ENCODE measurements at regions of chr12 and their contacts with region 1.

Region 1: GRCh38 chr12:47032644-47033043 is 46.8 kb upstream of the PCED1B start:
- DNase-seq: no peak
- H3K4me3 Mint-ChIP-seq: no peak overlapping the region
- H3K27ac Mint-ChIP-seq: no peak overlapping the region
- H3K4me1 Mint-ChIP-seq: peaks cover 9% of the 10 kb centered on the region
- H3K27me3 Mint-ChIP-seq: peaks cover 5% of the 10 kb centered on the region

Region 2: DNA sequence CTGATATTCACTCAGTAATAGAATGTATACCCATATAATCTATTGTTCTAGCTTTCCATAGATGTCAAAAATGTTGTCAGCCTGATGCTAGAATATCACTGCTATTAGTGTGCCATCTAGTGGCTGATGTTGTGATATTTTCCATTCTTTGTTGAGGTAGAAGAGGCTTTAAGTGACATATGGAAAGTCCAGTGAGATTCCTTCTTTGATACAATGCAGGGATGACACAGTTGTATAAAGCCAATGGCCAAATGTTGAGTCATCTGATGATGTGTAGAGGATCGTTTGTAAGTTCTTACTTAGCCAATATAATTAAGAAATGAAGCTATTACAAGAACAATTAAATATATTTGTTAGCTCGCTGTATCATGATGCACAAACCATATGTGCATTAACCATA is 11.3 kb before region 1 on chr12:
- CTCF ChIA-PET with region 1: interaction called, 13 read pairs
- POLR2A ChIA-PET with region 1: no interaction called
- DNase-seq: no peak
- H3K4me3 Mint-ChIP-seq: no peak overlapping the region
- H3K27ac Mint-ChIP-seq: no peak overlapping the region
- H3K4me1 Mint-ChIP-seq: peaks cover 6% of the 10 kb centered on the region
- H3K27me3 Mint-ChIP-seq: peaks cover 18% of the 10 kb centered on the region

Region 3: GRCh38 chr12:47071241-47071852 is 38.7 kb after region 1 on chr12:
- CTCF ChIA-PET with region 1: interaction called, 23 read pairs
- POLR2A ChIA-PET with region 1: no interaction called
- DNase-seq: no peak
- H3K4me3 Mint-ChIP-seq: no peak overlapping the region
- H3K27ac Mint-ChIP-seq: no peak overlapping the region
- H3K4me1 Mint-ChIP-seq: peaks cover 3% of the 10 kb centered on the region
- H3K27me3 Mint-ChIP-seq: no peaks in the 10 kb centered on the region

Region 4: DNA sequence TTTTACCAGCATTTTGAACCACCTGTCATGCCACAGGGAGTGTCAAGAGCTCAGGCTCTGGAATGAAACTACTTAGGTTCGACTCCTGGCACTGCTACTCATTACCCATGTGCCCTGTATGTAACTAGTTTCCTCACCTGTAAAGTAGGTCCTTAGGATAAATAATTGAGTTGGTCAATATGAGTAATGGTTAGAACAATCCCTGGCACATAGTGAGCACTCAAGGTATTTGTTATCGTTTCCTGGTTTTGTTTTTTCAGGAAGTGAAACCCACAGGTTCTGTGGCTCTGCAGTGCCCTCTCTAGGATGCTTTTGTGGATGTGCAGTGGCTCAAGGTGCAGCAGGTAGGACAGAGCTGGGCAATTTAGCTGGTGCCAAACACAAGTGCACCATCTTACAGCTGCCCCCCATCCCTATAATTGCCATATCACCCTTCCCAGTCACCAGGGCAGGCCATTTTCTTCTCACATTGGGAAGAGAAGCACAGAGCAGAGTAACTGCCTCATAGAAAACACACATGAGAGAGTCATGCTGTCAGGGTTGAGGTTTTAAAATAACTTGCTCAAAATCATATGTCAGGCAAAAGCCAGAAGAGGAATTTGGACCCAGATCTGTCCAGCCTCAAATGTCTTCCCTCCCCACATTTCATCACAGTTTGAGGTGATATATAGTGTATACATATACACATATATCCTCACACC is 375.7 kb after region 1 on chr12:
- CTCF ChIA-PET with region 1: interaction called, 11 read pairs
- POLR2A ChIA-PET with region 1: no interaction called
- DNase-seq: peak; percentile 61
- H3K4me3 Mint-ChIP-seq: no peak overlapping the region
- H3K27ac Mint-ChIP-seq: no peak overlapping the region
- H3K4me1 Mint-ChIP-seq: peaks cover 28% of the 10 kb centered on the region
- H3K27me3 Mint-ChIP-seq: no peaks in the 10 kb centered on the region

Measured in activated CD4-positive, alpha-beta memory T cell treated with anti-CD3 and anti-CD28 coated beads, Interleukin-2, amount 10 ng/mL, durations not matched to agents 7 days and 5 days (primary cell).